ENCODE measurements at regions of chr17 and their contacts with region 1.

Region 1: DNA sequence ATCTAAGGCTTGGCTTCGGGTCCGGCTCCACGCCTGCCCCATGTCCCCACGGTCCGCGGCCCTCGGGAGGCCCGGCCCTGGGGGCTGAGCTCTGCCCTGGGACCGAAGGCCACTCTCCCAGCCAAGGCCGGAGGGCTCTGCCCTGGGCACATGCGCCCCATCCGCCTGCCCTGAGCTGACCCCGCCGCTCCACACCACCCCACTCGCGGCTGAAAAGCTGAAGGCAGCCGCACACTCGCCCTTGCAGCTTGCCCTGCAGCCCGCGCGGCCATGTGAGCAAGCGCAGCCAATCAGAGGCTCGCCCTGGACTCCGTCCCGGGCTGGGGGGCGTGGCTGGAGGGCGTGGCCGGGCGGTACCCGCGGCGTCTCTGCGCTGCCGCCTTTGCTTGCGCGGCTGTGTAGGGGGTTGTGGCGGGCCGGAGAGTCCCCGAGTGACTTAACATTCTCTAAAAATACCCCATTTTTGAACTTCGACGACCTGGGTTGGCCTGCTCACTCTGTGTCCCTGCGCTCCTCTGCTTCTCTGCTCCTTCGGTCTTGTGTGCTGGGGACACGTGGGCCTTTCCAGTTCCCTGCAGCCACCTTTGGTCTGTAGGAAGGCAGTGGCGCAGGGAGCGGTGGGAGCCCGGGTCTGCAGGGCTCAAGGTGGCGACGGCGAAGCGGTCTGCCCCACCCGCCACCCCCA is 8.8 kb upstream of the MAP2K3 start:
- DNase-seq: peak; percentile 78 to 99 (median 86)
- ATAC-seq: peak; percentile 93
- H3K4me3 ChIP-seq: peak overlapping the region; percentile 71
- H3K4me3 Mint-ChIP-seq: peak overlapping the region; percentile 80 to 99 (median 94)
- H3K27ac ChIP-seq: peak overlapping the region; percentile 91
- H3K27ac Mint-ChIP-seq: peak overlapping the region; percentile 73 to 96 (median 92)
- H3K4me1 ChIP-seq: peaks cover 24 to 40% of the 10 kb centered on the region in 2 donors
- H3K4me1 Mint-ChIP-seq: peaks cover 34 to 52% (median 49%) of the 10 kb centered on the region in 7 donors
- H3K27me3 ChIP-seq: no peaks in the 10 kb centered on the region
- H3K27me3 Mint-ChIP-seq: no peaks in the 10 kb centered on the region

Region 2: DNA sequence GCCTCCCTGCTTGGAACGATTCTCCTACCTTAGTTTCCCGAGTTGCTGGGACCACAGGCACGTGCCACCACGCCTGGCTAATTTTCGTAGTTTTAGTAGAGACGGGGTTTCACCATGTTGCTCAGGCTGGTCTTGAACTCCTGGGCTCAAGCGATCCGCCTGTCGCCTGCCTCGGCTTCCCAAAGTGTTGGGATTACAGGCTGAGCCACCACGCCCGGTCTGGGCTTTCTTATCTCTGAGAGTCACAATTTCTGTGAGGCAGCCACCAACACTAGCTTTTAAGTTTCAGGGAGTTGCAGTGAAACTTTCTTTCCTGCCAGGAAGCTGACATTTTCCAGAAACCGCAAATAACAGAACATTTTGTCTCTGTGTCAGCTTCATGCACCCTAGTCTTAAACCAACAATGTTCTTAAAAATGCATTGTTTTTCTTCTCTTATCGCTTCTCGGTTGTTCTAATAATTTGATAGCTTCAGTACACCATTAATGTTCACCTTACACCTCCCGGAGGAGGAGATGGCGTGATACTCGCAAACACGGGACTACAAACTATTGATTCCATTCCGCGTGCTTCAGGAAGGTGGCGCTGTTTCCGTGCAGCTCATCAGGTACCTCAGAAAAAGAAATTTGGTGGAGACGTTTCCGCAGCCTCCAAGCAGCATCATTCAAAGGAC is 156.3 kb before region 1 on chr17:
- CTCF ChIA-PET with region 1: interaction called, 8 read pairs
- POLR2A ChIA-PET with region 1: interaction called, 6 read pairs
- intact Hi-C with region 1: loop called (anchors 1 kb)
- DNase-seq: peak; percentile 36 to 76 (median 62)
- ATAC-seq: peak; percentile 91
- H3K4me3 ChIP-seq: no peak overlapping the region
- H3K4me3 Mint-ChIP-seq: peak overlapping the region in 7 of 10 donors; percentile 1 to 72 (median 40)
- H3K27ac ChIP-seq: no peak overlapping the region
- H3K27ac Mint-ChIP-seq: peak overlapping the region in 3 of 9 donors; percentile 6 to 47 (median 35)
- H3K4me1 ChIP-seq: peaks cover 0 to 5% of the 10 kb centered on the region in 2 donors
- H3K4me1 Mint-ChIP-seq: peaks cover 6 to 15% (median 10%) of the 10 kb centered on the region in 7 donors
- H3K27me3 ChIP-seq: no peaks in the 10 kb centered on the region
- H3K27me3 Mint-ChIP-seq: peaks cover 0 to 16% (median 5%) of the 10 kb centered on the region in 5 donors

Measured in naive thymus-derived CD4-positive, alpha-beta T cell (primary cell).